CD4-positive, alpha-beta T cell (primary cell): ENCODE measurements at regions of chr3 and their contacts with region 1.

Region 1: GRCh38 chr3:43423142-43423541 is 136.8 kb downstream of the SNRK start:
- DNase-seq: no peak
- ATAC-seq: no peak
- H3K4me3 ChIP-seq: no peak overlapping the region
- H3K4me3 Mint-ChIP-seq: no peak overlapping the region
- H3K27ac ChIP-seq: no peak overlapping the region
- H3K27ac Mint-ChIP-seq: no peak overlapping the region
- H3K4me1 ChIP-seq: no peaks in the 10 kb centered on the region
- H3K4me1 Mint-ChIP-seq: no peaks in the 10 kb centered on the region
- H3K27me3 ChIP-seq: no peaks in the 10 kb centered on the region
- H3K27me3 Mint-ChIP-seq: no peaks in the 10 kb centered on the region
- CTCF ChIP-seq: no peak

Region 2: GRCh38 chr3:43455233-43455632 is 32.1 kb after region 1 on chr3:
- CTCF ChIA-PET with region 1: no interaction called
- POLR2A ChIA-PET with region 1: no interaction called
- intact Hi-C with region 1: loop called in 1 of 2 experiments (anchors 5 kb)
- DNase-seq: no peak
- ATAC-seq: no peak
- H3K4me3 ChIP-seq: no peak overlapping the region
- H3K4me3 Mint-ChIP-seq: no peak overlapping the region
- H3K27ac ChIP-seq: no peak overlapping the region
- H3K27ac Mint-ChIP-seq: no peak overlapping the region
- H3K4me1 ChIP-seq: no peaks in the 10 kb centered on the region
- H3K4me1 Mint-ChIP-seq: peaks cover 13% of the 10 kb centered on the region
- H3K27me3 ChIP-seq: no peaks in the 10 kb centered on the region
- H3K27me3 Mint-ChIP-seq: no peaks in the 10 kb centered on the region
- CTCF ChIP-seq: no peak

Region 3: GRCh38 chr3:43497905-43498365 is 74.8 kb after region 1 on chr3:
- CTCF ChIA-PET with region 1: interaction called, 7 read pairs
- POLR2A ChIA-PET with region 1: no interaction called
- intact Hi-C with region 1: loop called in 1 of 2 experiments (anchors 5 kb)
- DNase-seq: no peak
- ATAC-seq: no peak
- H3K4me3 ChIP-seq: no peak overlapping the region
- H3K4me3 Mint-ChIP-seq: no peak overlapping the region
- H3K27ac ChIP-seq: no peak overlapping the region
- H3K27ac Mint-ChIP-seq: peak overlapping the region; percentile 52
- H3K4me1 ChIP-seq: peaks cover 26% of the 10 kb centered on the region
- H3K4me1 Mint-ChIP-seq: peaks cover 59% of the 10 kb centered on the region
- H3K27me3 ChIP-seq: no peaks in the 10 kb centered on the region
- H3K27me3 Mint-ChIP-seq: no peaks in the 10 kb centered on the region
- CTCF ChIP-seq: no peak

Region 4: GRCh38 chr3:43549626-43550290 is 126.6 kb after region 1 on chr3:
- CTCF ChIA-PET with region 1: no interaction called
- POLR2A ChIA-PET with region 1: no interaction called
- intact Hi-C with region 1: no loop called
- DNase-seq: no peak
- ATAC-seq: no peak
- H3K4me3 ChIP-seq: no peak overlapping the region
- H3K4me3 Mint-ChIP-seq: no peak overlapping the region
- H3K27ac ChIP-seq: no peak overlapping the region
- H3K27ac Mint-ChIP-seq: no peak overlapping the region
- H3K4me1 ChIP-seq: no peaks in the 10 kb centered on the region
- H3K4me1 Mint-ChIP-seq: no peaks in the 10 kb centered on the region
- H3K27me3 ChIP-seq: no peaks in the 10 kb centered on the region
- H3K27me3 Mint-ChIP-seq: no peaks in the 10 kb centered on the region
- CTCF ChIP-seq: no peak